HCT116 (cell line): ENCODE measurements at regions of chr16 and their contacts with region 1.

Region 1: DNA sequence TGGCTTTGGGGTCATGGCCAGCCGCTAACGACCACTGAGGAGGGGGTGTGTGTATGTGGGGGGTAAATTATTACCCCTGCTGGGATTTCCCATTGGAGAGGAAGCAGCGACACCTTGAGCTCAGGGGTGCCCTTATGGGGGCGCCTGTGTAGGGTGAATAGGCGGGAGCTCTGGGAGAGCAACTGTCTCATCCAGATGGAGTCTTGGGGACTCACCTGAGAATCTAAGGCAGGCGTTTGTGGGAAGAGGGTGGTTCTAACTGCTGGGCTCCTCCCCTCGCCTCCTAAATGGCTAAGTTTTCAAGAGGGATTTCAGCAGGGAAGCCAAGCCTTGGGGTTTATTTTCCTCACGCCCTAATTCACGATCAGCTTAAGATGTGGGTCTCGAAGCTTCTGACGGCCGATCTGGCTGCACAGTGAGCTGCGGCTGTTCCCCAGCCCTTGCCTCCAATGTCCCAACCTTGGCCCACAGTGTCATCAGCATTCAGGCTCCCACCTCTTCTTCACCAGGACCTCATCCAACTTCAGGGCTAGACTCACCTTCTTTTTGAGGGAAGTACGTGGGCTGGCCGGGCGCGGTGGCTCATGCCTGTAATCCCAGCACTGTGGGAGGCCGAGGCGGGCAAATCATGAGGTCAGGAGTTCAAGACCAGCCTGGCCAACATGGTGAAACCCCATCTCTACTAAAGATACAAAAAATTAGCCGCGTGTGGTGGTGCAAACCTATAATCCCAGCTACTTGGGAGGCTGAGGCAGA is 136.9 kb upstream of the EEF2KMT start:
- DNase-seq: no peak
- ATAC-seq: no peak
- H3K4me3 ChIP-seq: no peak overlapping the region
- H3K27ac ChIP-seq: no peak overlapping the region
- H3K4me1 ChIP-seq: no peaks in the 10 kb centered on the region
- H3K27me3 ChIP-seq: peaks cover 3% of the 10 kb centered on the region; the same call in 1 of the 2 replicates
- CTCF ChIP-seq: no peak
- POLR2A ChIP-seq: no peak
- RAD21 ChIP-seq: no peak

Region 2: DNA sequence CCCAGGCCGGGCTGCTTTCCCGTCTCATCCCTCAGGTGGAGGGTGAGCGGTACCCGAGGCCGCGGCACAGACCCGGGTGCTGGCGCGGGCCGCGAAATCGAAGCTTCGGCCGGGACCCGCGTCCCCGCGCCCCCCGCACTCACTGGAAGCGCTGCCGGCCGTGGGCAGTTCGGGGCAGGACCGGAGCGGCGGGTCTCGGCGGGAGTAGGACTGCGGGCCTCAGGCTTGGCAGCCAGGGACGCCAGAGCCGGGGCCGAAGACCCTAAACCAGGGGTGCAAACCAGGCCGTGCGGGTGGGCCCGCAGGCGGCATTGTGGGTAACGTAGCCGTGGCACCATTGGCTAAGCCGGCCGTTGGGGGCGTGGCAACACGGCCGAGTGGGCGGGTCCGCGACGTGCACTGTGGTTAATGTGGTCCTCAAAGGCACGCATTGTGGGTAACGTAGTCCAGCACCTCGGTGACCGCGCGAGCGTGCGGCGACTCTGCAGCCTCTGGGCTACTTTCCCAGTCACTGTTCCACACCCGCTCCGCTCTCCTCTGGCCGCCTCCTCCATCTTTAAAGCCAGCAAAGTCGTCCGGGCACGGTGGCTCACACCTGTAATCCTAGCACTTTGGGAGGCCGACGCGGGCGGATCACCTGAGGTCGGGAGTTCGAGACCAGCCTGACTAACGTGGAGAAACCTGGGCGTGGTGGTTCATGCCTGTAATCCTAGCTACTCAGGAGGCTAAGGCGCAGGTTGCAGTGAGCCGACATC is 467.4 kb before region 1 on chr16 and contains the start of gene ZNF500:
- CTCF ChIA-PET with region 1: no interaction called
- POLR2A ChIA-PET with region 1: no interaction called
- RAD21 ChIA-PET with region 1: no interaction called
- intact Hi-C with region 1: no loop called
- DNase-seq: peak; percentile 90
- ATAC-seq: peak; percentile 87
- H3K4me3 ChIP-seq: peak within 1 kb of the TSS; percentile 92 to 93
- H3K27ac ChIP-seq: peak within 1 kb of the TSS; percentile 56
- H3K4me1 ChIP-seq: peaks cover 12 to 23% of the 10 kb centered on the region in 2 experiments
- H3K27me3 ChIP-seq: no peaks in the 10 kb centered on the region
- CTCF ChIP-seq: no peak
- POLR2A ChIP-seq: peak; percentile 81
- RAD21 ChIP-seq: no peak
- total RNA-seq, gene ZNF500: 20.1 TPM

Region 3: DNA sequence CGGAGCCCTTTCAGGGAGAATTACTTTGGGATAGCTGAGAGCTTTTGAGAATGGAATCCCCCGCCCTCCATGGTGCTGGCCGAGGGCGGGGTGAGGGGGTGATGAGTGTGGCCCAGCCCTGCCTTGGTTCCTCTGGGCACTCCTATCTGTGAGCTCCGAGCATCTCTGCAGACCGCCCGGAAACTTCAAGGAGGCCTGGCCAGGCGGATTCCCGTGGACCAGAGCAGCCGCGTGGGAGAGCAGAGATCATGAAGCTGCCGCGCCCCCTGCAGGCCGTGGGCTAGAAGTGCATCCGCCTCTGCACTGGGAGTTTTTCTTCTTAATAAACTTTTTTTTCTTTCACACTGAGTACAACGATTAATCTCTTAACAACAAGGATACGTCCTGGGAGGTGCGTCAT is 256.0 kb after region 1 on chr16:
- CTCF ChIA-PET with region 1: interaction called, 3 read pairs
- POLR2A ChIA-PET with region 1: no interaction called
- RAD21 ChIA-PET with region 1: interaction called in 1 of 2 experiments, 3 read pairs
- intact Hi-C with region 1: loop called (anchors 1 kb)
- DNase-seq: peak; percentile 15
- ATAC-seq: peak; percentile 72
- H3K4me3 ChIP-seq: no peak overlapping the region
- H3K27ac ChIP-seq: no peak overlapping the region
- H3K4me1 ChIP-seq: no peaks in the 10 kb centered on the region
- H3K27me3 ChIP-seq: peaks cover 17% of the 10 kb centered on the region
- CTCF ChIP-seq: peak; percentile 51 to 90 (median 79); a peak in 5 of 6 replicates
- POLR2A ChIP-seq: no peak
- RAD21 ChIP-seq: peak; percentile 72

Region 4: GRCh38 chr16:5615868-5616642 is 381.6 kb after region 1 on chr16:
- CTCF ChIA-PET with region 1: interaction called, 5 read pairs
- POLR2A ChIA-PET with region 1: no interaction called
- RAD21 ChIA-PET with region 1: no interaction called
- intact Hi-C with region 1: loop called (anchors 5 kb)
- DNase-seq: peak; percentile 24
- ATAC-seq: peak; percentile 99
- H3K4me3 ChIP-seq: no peak overlapping the region
- H3K27ac ChIP-seq: no peak overlapping the region
- H3K4me1 ChIP-seq: peaks cover 0 to 3% of the 10 kb centered on the region in 2 experiments; a peak in 1 of 4 replicates
- H3K27me3 ChIP-seq: peaks cover 22% of the 10 kb centered on the region
- CTCF ChIP-seq: peak; percentile 47 to 84 (median 78); a peak in 5 of 6 replicates
- POLR2A ChIP-seq: no peak
- RAD21 ChIP-seq: peak; percentile 54